CD8-positive, alpha-beta T cell (primary cell): ENCODE measurements at regions of chr11 and their contacts with region 1.

Region 1: GRCh38 chr11:47932544-47932943 is 47.8 kb upstream of the PTPRJ start:
- DNase-seq: no peak
- ATAC-seq: no peak
- H3K4me3 ChIP-seq: no peak overlapping the region
- H3K4me3 Mint-ChIP-seq: no peak overlapping the region
- H3K27ac ChIP-seq: no peak overlapping the region
- H3K27ac Mint-ChIP-seq: no peak overlapping the region
- H3K4me1 ChIP-seq: peaks cover 9% of the 10 kb centered on the region
- H3K4me1 Mint-ChIP-seq: peaks cover 14% of the 10 kb centered on the region
- H3K27me3 ChIP-seq: no peaks in the 10 kb centered on the region
- H3K27me3 Mint-ChIP-seq: no peaks in the 10 kb centered on the region
- CTCF ChIP-seq: no peak

Region 2: GRCh38 chr11:47514825-47515647 is 417.5 kb before region 1 on chr11:
- CTCF ChIA-PET with region 1: no interaction called
- POLR2A ChIA-PET with region 1: no interaction called
- intact Hi-C with region 1: no loop called
- DNase-seq: peak in 1 of 9 experiments; percentile 20
- ATAC-seq: peak; percentile 37
- H3K4me3 ChIP-seq: no peak overlapping the region
- H3K4me3 Mint-ChIP-seq: peak overlapping the region; percentile 33
- H3K27ac ChIP-seq: peak overlapping the region in 1 of 2 experiments; percentile 9
- H3K27ac Mint-ChIP-seq: peak overlapping the region; percentile 49
- H3K4me1 ChIP-seq: peaks cover 54% of the 10 kb centered on the region
- H3K4me1 Mint-ChIP-seq: peaks cover 71% of the 10 kb centered on the region
- H3K27me3 ChIP-seq: no peaks in the 10 kb centered on the region
- H3K27me3 Mint-ChIP-seq: no peaks in the 10 kb centered on the region
- CTCF ChIP-seq: no peak

Region 3: GRCh38 chr11:47946682-47947575 is 14.4 kb after region 1 on chr11:
- CTCF ChIA-PET with region 1: interaction called, 17 read pairs
- POLR2A ChIA-PET with region 1: interaction called, 3 read pairs
- intact Hi-C with region 1: no loop called
- DNase-seq: peak in 2 of 9 experiments; percentile 17 to 33
- ATAC-seq: no peak
- H3K4me3 ChIP-seq: no peak overlapping the region
- H3K4me3 Mint-ChIP-seq: no peak overlapping the region
- H3K27ac ChIP-seq: no peak overlapping the region
- H3K27ac Mint-ChIP-seq: no peak overlapping the region
- H3K4me1 ChIP-seq: peaks cover 22% of the 10 kb centered on the region
- H3K4me1 Mint-ChIP-seq: peaks cover 30% of the 10 kb centered on the region
- H3K27me3 ChIP-seq: no peaks in the 10 kb centered on the region
- H3K27me3 Mint-ChIP-seq: no peaks in the 10 kb centered on the region
- CTCF ChIP-seq: no peak

Region 4: GRCh38 chr11:47980245-47981049 is 47.9 kb after region 1 on chr11 and contains the start of gene PTPRJ:
- CTCF ChIA-PET with region 1: interaction called, 14 read pairs
- POLR2A ChIA-PET with region 1: no interaction called
- intact Hi-C with region 1: loop called in 1 of 2 experiments (anchors 5 kb)
- DNase-seq: peak in 8 of 9 experiments; percentile 39 to 85 (median 63)
- ATAC-seq: peak; percentile 70
- H3K4me3 ChIP-seq: peak within 1 kb of the TSS; percentile 43 to 65
- H3K4me3 Mint-ChIP-seq: peak within 1 kb of the TSS; percentile 93
- H3K27ac ChIP-seq: peak within 1 kb of the TSS; percentile 19 to 40
- H3K27ac Mint-ChIP-seq: peak within 1 kb of the TSS; percentile 52
- H3K4me1 ChIP-seq: peaks cover 30% of the 10 kb centered on the region
- H3K4me1 Mint-ChIP-seq: peaks cover 36% of the 10 kb centered on the region
- H3K27me3 ChIP-seq: no peaks in the 10 kb centered on the region
- H3K27me3 Mint-ChIP-seq: no peaks in the 10 kb centered on the region
- CTCF ChIP-seq: no peak
- total RNA-seq, gene PTPRJ: 26.9 to 31.4 TPM

Region 5: DNA sequence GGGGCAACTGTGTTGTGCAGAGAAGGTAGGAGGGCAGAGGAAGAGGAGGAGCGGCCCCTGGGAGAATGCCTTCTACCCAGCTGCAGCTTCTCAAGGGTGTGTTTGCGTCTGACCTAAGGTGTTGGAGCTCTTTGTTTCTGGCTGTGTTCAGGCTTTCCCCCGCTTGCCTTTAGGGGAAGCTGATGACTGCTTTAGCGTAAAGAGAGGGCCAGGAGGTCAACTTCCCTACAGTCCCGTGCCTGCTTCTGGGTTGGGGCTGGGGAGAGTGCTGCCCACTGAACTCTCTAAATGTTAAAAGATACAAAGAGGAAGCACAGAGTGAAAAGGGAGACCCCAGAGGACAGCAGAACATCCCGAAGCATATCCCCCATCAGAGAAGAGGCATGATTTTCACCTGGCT is 147.1 kb after region 1 on chr11:
- CTCF ChIA-PET with region 1: interaction called, 15 read pairs
- POLR2A ChIA-PET with region 1: no interaction called
- intact Hi-C with region 1: no loop called
- DNase-seq: no peak
- ATAC-seq: no peak
- H3K4me3 ChIP-seq: no peak overlapping the region
- H3K4me3 Mint-ChIP-seq: no peak overlapping the region
- H3K27ac ChIP-seq: no peak overlapping the region
- H3K27ac Mint-ChIP-seq: no peak overlapping the region
- H3K4me1 ChIP-seq: peaks cover 16% of the 10 kb centered on the region
- H3K4me1 Mint-ChIP-seq: peaks cover 52% of the 10 kb centered on the region
- H3K27me3 ChIP-seq: no peaks in the 10 kb centered on the region
- H3K27me3 Mint-ChIP-seq: no peaks in the 10 kb centered on the region
- CTCF ChIP-seq: no peak

Region 6: DNA sequence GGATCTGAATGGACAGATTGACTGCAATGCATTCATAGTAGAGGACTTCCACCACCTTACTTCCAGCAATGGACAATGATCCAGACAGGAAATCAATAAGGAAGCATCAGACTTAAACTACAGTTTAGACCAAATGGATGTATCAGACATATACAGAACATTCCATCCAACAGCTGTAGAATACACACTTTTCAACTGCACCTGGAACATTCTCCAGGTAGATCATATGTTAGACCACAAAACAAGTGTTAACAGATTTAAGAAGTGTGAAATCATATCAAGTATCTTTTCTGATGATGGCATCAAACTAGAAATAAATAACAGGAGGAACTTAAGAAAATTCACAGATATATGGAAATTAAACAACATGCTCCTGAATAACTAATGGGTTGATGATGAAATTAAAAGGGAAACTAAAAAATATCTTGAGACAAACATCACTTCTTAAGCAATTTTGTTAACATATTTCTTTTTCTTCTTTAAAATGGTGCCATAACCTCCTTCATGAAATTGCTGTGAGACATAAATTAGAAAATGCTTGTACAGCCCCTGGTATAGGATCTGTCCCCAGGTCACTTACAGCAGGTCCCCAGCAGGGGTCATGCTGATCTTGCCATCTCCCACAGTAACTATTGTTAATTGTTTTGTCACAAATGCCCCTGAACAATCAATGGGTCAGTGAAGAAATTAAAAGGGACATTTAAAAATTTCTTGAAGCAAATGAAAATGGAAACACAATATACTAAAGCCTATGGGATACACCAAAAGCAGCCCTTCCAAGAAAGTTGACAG is 184.1 kb after region 1 on chr11:
- CTCF ChIA-PET with region 1: interaction called, 340 read pairs
- POLR2A ChIA-PET with region 1: no interaction called
- intact Hi-C with region 1: no loop called
- DNase-seq: peak in 2 of 9 experiments; percentile 13 to 24
- ATAC-seq: peak; percentile 29
- H3K4me3 ChIP-seq: no peak overlapping the region
- H3K4me3 Mint-ChIP-seq: no peak overlapping the region
- H3K27ac ChIP-seq: no peak overlapping the region
- H3K27ac Mint-ChIP-seq: no peak overlapping the region
- H3K4me1 ChIP-seq: no peaks in the 10 kb centered on the region
- H3K4me1 Mint-ChIP-seq: no peaks in the 10 kb centered on the region
- H3K27me3 ChIP-seq: no peaks in the 10 kb centered on the region
- H3K27me3 Mint-ChIP-seq: no peaks in the 10 kb centered on the region
- CTCF ChIP-seq: peak; percentile 37